ENCODE measurements at regions of chr17 and their contacts with region 1.

Region 1: DNA sequence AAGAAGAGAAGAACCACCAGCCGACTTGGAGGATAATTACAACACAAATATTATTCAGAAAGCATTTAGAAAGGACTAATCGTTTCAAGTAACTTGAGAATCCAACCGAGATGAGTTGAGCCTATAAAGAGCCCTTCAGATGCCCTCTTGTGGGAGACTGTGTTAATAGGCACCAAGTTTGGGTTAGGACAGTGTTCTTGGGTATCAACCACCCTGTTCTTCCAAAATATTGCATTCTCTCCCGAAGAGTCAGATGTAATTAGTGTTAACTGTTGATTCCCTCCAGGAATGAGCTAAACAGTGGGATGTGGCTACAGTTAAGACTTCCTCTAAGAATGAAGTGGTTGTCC is 87.8 kb upstream of the NOL11 start:
- DNase-seq: peak; percentile 48

Region 2: DNA sequence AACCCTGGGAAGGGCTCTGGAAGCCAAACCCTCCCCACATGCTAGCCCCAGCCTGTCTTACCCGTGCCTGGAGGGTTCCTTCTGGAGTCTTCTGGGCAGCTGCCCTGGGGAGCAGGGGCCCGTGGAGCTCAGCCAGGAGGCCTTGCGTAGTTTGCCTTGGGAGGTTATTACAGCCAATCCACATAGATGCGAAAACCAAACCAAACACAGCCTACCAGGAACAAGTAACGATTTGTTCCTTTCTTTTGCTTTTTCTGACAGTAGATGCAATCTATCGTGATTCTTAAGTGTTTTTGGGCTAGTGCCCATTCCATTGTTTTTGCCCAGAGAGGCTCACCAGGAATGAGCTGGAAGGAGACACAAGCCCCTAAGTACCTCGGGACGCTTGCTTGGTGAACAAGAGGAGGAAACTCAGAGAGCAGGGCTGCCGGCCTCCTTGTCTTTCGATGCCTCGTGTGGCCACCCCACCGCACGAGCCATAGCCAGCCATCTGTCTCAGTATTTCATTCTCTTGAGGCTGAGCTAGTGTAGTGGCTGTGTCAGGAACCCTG is 14.9 kb before region 1 on chr17:
- CTCF ChIA-PET with region 1: interaction called, 10 read pairs
- POLR2A ChIA-PET with region 1: no interaction called
- DNase-seq: no peak

Region 3: GRCh38 chr17:67656494-67657203 is 26.7 kb after region 1 on chr17:
- CTCF ChIA-PET with region 1: no interaction called
- POLR2A ChIA-PET with region 1: no interaction called
- DNase-seq: no peak

Measured in HEK293T (cell line).